Gastrocnemius medialis (tissue), 4 donors: ENCODE measurements at regions of chr20 and their contacts with region 1.

Region 1: GRCh38 chr20:59032023-59032712 is at the start of gene ATP5F1E:
- DNase-seq: peak; percentile 95
- ATAC-seq: peak; percentile 95 to 97
- H3K4me3 ChIP-seq: peak within 1 kb of the TSS; percentile 79 to 92 (median 88)
- H3K27ac ChIP-seq: peak within 1 kb of the TSS; percentile 89 to 97 (median 95)
- H3K4me1 ChIP-seq: peaks cover 47% of the 10 kb centered on the region in 2 donors
- H3K27me3 ChIP-seq: no peaks in the 10 kb centered on the region
- CTCF ChIP-seq: no peak
- POLR2A ChIP-seq: peak; percentile 96 to 98
- total RNA-seq, gene ATP5F1E: 27.1 to 38.2 (median 33.7) TPM

Region 2: GRCh38 chr20:58571693-58572427 is 460.3 kb before region 1 on chr20:
- in situ Hi-C with region 1: no loop called
- intact Hi-C with region 1: no loop called
- DNase-seq: no peak
- ATAC-seq: no peak
- H3K4me3 ChIP-seq: no peak overlapping the region
- H3K27ac ChIP-seq: no peak overlapping the region
- H3K4me1 ChIP-seq: no peaks in the 10 kb centered on the region
- H3K27me3 ChIP-seq: peaks cover 9 to 11% (median 10%) of the 10 kb centered on the region in 3 donors
- CTCF ChIP-seq: no peak
- POLR2A ChIP-seq: no peak

Region 3: GRCh38 chr20:58634521-58635278 is 397.5 kb before region 1 on chr20:
- in situ Hi-C with region 1: no loop called
- intact Hi-C with region 1: no loop called
- DNase-seq: no peak
- ATAC-seq: no peak
- H3K4me3 ChIP-seq: no peak overlapping the region
- H3K27ac ChIP-seq: no peak overlapping the region
- H3K4me1 ChIP-seq: peaks cover 0 to 5% of the 10 kb centered on the region in 2 donors
- H3K27me3 ChIP-seq: no peaks in the 10 kb centered on the region
- CTCF ChIP-seq: no peak
- POLR2A ChIP-seq: no peak

Region 4: DNA sequence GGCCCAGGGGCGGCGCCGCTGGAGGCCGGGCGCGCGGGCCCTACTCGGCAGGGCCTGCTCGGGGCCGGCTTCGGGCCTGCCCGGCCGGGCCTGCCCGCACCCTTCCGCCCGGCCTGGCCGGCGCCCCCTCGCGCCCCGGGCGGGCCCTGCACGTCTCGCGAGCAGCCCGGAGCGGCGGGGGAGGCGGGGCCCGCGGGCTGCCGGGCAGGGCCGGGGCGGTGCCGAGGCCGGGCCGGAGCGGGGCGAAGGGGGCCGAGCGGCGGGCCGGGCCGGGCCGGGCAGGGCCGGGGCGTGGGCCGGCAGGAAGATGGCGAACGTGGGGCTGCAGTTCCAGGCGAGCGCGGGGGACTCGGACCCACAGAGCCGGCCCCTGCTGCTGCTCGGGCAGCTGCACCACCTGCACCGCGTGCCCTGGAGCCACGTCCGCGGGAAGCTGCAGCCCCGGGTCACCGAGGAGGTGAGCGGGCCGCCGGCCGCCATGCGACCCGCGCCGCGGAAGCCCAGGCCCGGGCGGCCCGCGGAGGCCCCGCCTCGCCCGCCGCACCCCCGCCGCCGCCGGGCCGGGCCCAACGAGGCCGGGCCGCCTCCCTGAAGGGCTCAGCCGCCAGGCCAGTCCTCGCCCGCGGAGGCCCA is 339.5 kb before region 1 on chr20 and contains the start of gene NPEPL1:
- in situ Hi-C with region 1: loop called in 1 of 4 experiments (anchors 25 kb)
- intact Hi-C with region 1: no loop called
- DNase-seq: peak in 1 of 2 donors; percentile 58
- ATAC-seq: peak; percentile 80 to 81
- H3K4me3 ChIP-seq: peak within 1 kb of the TSS; percentile 51 to 66 (median 58)
- H3K27ac ChIP-seq: peak within 1 kb of the TSS; percentile 81 to 90 (median 86)
- H3K4me1 ChIP-seq: peaks cover 32 to 38% of the 10 kb centered on the region in 2 donors
- H3K27me3 ChIP-seq: no peaks in the 10 kb centered on the region
- CTCF ChIP-seq: peak in 4 of 5 experiments; percentile 35 to 61 (median 45)
- POLR2A ChIP-seq: peak in 1 of 2 donors; percentile 38
- total RNA-seq, gene NPEPL1: 18.1 to 51.5 (median 34.3) TPM

Region 5: DNA sequence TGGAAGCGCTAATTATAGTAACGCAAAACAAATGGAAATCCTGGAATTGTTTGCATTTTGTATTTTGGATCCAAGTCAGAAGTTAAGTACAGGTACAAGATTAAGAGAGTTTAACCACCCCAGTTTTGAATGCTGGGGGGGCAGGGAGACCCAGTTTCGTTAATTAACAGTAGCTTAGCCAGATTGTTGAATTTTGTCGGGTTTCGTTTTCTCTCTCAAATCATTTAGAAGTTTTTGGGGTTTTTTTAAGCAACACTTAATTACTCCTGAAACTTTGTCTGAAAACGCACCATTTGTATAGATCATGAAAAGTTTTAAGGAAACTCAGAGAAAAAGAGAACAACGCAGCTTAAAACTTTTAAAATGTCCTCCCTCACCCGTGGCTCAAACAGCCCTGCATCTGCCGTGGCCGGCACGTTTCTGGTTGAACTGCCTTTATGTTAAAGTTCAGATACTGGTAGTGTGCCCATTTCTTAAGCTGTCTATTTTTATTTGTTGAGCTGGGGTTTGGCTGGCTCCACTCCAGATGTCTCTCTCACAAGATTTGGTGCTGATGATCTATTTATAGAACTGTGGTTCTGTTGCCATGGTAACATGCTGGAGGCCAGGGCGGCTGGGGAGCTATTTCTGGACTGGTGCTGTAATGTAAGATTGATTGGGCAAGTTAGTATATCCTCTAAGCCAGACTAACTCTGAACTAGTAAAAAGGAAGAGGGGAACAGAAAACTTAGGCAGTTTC is 124.6 kb before region 1 on chr20:
- in situ Hi-C with region 1: no loop called
- intact Hi-C with region 1: loop called (anchors 5 kb)
- DNase-seq: peak; percentile 96 to 98
- ATAC-seq: peak; percentile 95 to 96
- H3K4me3 ChIP-seq: peak overlapping the region; percentile 32 to 40 (median 34)
- H3K27ac ChIP-seq: peak overlapping the region; percentile 84 to 99 (median 96)
- H3K4me1 ChIP-seq: peaks cover 30 to 54% of the 10 kb centered on the region in 2 donors
- H3K27me3 ChIP-seq: no peaks in the 10 kb centered on the region
- CTCF ChIP-seq: no peak
- POLR2A ChIP-seq: peak; percentile 56 to 77

Region 6: DNA sequence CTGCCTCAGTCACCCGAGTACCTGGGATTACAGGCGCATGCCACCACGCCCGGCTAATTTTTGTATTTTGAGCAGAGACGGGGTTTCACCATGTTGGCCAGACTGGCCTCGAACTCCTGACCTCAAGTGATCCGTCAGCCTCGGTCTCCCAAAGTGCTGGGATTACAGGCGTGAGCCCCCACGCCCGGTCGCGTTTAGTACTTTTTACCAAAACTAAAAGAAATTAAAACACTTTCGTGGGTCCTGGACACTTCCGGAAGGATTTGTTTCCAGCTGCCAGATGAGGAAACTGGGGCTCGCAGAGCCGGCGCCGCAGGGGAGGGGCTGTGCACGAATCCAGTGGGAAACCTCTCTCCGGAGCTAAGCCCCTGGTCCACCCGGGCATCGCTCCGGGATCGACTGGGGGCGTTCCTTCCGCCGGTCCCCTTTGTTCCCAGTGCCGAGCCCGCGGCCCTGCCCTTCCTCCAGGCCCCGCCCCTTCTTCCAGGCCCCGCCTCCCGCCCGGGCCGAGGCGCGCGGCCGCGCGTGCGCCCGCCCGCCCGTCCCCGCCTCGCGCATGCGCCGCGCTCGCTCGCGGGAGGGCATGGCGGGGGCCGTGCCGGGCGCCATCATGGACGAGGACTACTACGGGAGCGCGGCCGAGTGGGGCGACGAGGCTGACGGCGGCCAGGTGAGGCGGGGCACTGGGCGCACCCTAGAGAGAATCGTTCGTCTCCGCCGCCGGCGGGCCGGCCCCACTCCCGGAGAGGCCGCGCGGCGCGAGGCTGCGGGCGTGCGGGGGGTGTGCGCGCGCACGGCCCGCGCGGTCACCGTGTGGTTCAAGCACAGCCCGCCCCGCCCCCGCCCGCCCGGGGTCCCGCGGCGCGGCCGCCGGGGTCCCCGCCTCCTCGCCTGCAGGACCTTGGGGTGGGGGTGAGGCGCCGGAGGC is 51.2 kb before region 1 on chr20 and contains the start of gene NELFCD:
- in situ Hi-C with region 1: loop called in 3 of 4 experiments (anchors 5 to 10 kb)
- intact Hi-C with region 1: loop called (anchors 1 kb)
- DNase-seq: peak; percentile 72 to 82
- ATAC-seq: peak; percentile 89 to 92
- H3K4me3 ChIP-seq: peak within 1 kb of the TSS; percentile 90 to 100 (median 95)
- H3K27ac ChIP-seq: peak within 1 kb of the TSS; percentile 83 to 92 (median 90)
- H3K4me1 ChIP-seq: peaks cover 32 to 38% of the 10 kb centered on the region in 2 donors
- H3K27me3 ChIP-seq: no peaks in the 10 kb centered on the region
- CTCF ChIP-seq: no peak
- POLR2A ChIP-seq: peak; percentile 80
- total RNA-seq, gene NELFCD: 37.8 to 44.3 (median 40.9) TPM

Region 7: GRCh38 chr20:59006864-59007664 is 25.1 kb before region 1 on chr20 and contains the start of gene CTSZ:
- in situ Hi-C with region 1: no loop called
- intact Hi-C with region 1: loop called (anchors 1 kb)
- DNase-seq: peak in 1 of 2 donors; percentile 37
- ATAC-seq: peak; percentile 72 to 79
- H3K4me3 ChIP-seq: peak within 1 kb of the TSS; percentile 65 to 78 (median 76)
- H3K27ac ChIP-seq: peak within 1 kb of the TSS; percentile 68 to 82 (median 78)
- H3K4me1 ChIP-seq: peaks cover 16 to 27% of the 10 kb centered on the region in 2 donors
- H3K27me3 ChIP-seq: no peaks in the 10 kb centered on the region
- CTCF ChIP-seq: no peak
- POLR2A ChIP-seq: peak in 1 of 2 donors; percentile 56
- total RNA-seq, gene CTSZ: 25.2 to 58.7 (median 51.9) TPM

Region 8: DNA sequence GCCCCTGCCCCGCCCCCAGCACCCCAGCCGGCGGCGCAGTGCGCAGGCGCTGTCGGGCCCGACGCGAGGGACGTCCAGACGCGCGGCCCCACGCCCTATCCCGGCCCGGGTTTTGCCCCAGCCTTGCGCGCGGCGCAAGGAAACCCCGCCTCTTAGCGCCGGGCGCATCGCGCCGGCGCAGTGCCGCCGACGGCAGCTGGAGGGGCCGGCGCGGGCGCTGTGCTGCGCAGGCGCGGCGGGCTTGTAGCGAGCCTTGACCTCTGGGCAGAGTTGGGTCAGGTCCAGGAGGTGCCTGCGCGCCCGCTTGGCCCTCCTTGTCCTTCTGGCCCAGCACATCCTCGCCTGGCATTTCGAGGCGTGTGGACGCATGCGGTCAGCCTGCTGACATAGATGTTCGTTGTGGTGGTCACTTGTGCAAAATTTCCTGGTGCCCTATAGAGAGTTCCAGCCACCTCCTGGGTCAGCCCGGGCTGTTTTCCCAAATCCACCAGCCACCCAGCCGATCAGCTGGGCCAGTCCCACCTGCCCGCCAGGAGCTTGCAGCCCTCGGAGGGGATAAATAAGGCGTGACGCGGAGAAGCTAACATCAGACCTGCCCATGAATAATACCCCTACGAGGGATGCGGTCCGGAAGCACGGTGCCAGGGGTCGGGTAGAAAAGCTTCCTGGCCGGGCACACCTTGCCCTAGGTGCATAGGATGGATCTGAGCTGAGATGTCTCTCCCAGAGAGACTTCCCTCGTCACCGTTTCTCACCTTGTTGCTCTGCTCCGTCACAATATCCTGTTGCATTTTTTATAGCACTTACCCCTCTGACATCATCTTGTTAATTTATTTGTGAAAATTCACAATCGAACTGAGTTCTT is 10.9 kb after region 1 on chr20:
- in situ Hi-C with region 1: no loop called
- intact Hi-C with region 1: loop called (anchors 1 kb)
- DNase-seq: peak; percentile 85 to 92
- ATAC-seq: peak; percentile 91 to 97
- H3K4me3 ChIP-seq: peak overlapping the region; percentile 83 to 96 (median 86)
- H3K27ac ChIP-seq: peak overlapping the region; percentile 84 to 92 (median 90)
- H3K4me1 ChIP-seq: peaks cover 28 to 30% of the 10 kb centered on the region in 2 donors
- H3K27me3 ChIP-seq: no peaks in the 10 kb centered on the region
- CTCF ChIP-seq: peak in 2 of 5 experiments; percentile 12 to 41
- POLR2A ChIP-seq: no peak